Heart right ventricle (tissue), 16 donors: ENCODE measurements at regions of chr17 and their contacts with region 1.

Region 1: GRCh38 chr17:76523084-76524037 is 14.1 kb downstream of the CYGB start:
- DNase-seq: peak; percentile 63 to 81
- ATAC-seq: peak; percentile 44 to 64 (median 52)
- H3K4me3 ChIP-seq: no peak overlapping the region
- H3K27ac ChIP-seq: no peak overlapping the region
- H3K4me1 ChIP-seq: peaks cover 15 to 42% (median 35%) of the 10 kb centered on the region in 9 donors
- H3K27me3 ChIP-seq: no peaks in the 10 kb centered on the region
- CTCF ChIP-seq: peak; percentile 97 to 100 (median 100)

Region 2: GRCh38 chr17:76547184-76547641 is 23.9 kb after region 1 on chr17:
- intact Hi-C with region 1: loop called in 7 of 10 experiments (anchors 1 to 2 kb)
- DNase-seq: peak in 1 of 2 donors; percentile 81
- ATAC-seq: peak; percentile 37 to 74 (median 65)
- H3K4me3 ChIP-seq: no peak overlapping the region
- H3K27ac ChIP-seq: peak overlapping the region; percentile 30 to 79 (median 52)
- H3K4me1 ChIP-seq: peaks cover 38 to 71% (median 52%) of the 10 kb centered on the region in 9 donors
- H3K27me3 ChIP-seq: peaks cover 0 to 21% (median 0%) of the 10 kb centered on the region in 7 donors
- CTCF ChIP-seq: peak; percentile 66 to 81 (median 76)

Region 3: GRCh38 chr17:76585818-76586593 is 62.6 kb after region 1 on chr17 and contains the start of gene ST6GALNAC2:
- intact Hi-C with region 1: loop called in 6 of 10 experiments (anchors 1 to 2 kb)
- DNase-seq: peak; percentile 45 to 69
- ATAC-seq: peak; percentile 90 to 95 (median 94)
- H3K4me3 ChIP-seq: peak within 1 kb of the TSS; percentile 56 to 73 (median 65)
- H3K27ac ChIP-seq: peak within 1 kb of the TSS in 9 of 10 donors; percentile 5 to 82 (median 53)
- H3K4me1 ChIP-seq: peaks cover 3 to 26% (median 21%) of the 10 kb centered on the region in 9 donors
- H3K27me3 ChIP-seq: peaks cover 0 to 57% (median 15%) of the 10 kb centered on the region in 7 donors
- CTCF ChIP-seq: peak in 8 of 9 donors; percentile 20 to 65 (median 44)
- total RNA-seq, gene ST6GALNAC2: 3.7 to 8.4 (median 6.1) TPM